ENCODE measurements at regions of chr16 and their contacts with region 1.

Region 1: DNA sequence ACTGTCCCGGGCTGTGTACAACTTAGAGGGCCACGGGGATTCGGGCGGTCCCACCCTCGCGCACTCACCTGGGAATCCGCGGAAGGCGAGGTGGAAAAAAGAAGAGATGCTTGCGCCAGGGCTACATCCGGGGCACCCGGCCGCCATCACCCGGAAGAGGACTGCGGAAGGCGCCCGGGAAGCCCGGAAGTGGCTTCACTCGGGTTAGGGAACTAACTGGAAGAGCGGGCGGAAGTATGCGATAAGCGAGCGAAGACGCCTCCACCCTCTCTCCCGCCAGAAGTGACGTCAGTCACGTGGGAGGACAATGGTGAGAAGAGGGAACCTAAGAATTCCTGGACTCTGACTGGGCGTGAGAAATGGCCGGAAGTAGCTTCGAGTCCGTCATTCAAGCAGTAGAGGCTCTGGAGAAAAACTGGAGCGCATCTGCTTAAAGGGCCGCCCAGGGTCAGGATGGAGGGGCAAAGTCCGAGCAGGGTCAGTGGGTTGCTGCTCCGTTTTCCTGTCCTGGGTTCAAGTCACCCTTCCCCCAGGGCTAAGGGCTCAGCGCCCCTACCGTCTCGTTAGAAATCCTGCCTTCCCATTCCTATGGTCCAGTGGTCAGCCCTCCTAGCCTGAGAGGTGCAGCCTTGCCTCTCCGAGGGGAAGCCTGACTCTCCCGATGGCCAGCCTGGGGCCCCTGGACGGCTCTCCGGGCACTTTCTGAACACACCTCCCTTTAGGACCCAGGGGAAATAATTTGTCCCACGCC is at the start of gene CD2BP2:
- DNase-seq: peak; percentile 97 to 99
- H3K4me3 ChIP-seq: peak within 1 kb of the TSS; percentile 99
- H3K27ac ChIP-seq: peak within 1 kb of the TSS; percentile 82
- H3K4me1 ChIP-seq: peaks cover 19% of the 10 kb centered on the region
- H3K27me3 ChIP-seq: no peaks in the 10 kb centered on the region
- CTCF ChIP-seq: no peak
- total RNA-seq, gene CD2BP2: 84.6 TPM in 2 replicates

Region 2: DNA sequence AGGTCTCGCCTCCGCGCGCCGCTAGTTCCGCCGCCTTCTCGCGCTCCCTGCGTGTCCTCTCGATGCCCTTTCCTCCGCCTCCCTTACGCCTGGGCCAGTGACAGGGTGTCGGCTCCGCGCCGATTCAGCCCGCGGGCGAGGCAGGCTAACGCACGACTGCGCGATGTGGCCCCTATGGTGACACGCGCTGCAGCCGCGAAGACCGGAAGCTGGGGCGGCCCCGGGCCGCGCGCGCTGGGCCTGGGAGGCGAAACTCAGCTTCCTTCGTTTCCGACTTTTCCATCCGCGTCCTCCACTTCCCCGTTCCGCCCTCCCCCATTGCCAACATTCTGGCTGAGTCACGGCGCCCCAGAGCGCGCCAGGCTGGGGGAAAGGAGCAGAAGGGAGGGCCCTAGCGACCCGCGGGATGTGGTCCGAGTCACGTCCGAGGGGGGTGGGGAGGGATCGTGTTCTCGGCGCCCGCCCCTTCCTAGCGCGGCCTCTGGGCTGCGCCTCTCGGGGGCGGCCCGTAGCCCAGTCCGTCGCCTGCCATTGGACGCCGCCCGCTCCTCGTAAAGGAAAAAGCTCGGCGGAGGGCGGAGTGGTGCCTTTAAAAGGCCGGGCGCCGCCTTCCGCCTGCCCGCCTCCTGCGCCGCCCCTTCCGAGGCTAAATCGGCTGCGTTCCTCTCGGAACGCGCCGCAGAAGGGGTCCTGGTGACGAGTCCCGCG is 290.0 kb before region 1 on chr16 and contains the start of gene ALDOA:
- CTCF ChIA-PET with region 1: no interaction called
- POLR2A ChIA-PET with region 1: no interaction called
- intact Hi-C with region 1: loop called (anchors 2 kb)
- DNase-seq: peak; percentile 95 to 100
- H3K4me3 ChIP-seq: peak within 1 kb of the TSS; percentile 94
- H3K27ac ChIP-seq: peak within 1 kb of the TSS; percentile 92
- H3K4me1 ChIP-seq: peaks cover 50% of the 10 kb centered on the region
- H3K27me3 ChIP-seq: no peaks in the 10 kb centered on the region
- CTCF ChIP-seq: no peak
- total RNA-seq, gene ALDOA: 2,395 and 3,090 TPM in 2 replicates

Region 3: DNA sequence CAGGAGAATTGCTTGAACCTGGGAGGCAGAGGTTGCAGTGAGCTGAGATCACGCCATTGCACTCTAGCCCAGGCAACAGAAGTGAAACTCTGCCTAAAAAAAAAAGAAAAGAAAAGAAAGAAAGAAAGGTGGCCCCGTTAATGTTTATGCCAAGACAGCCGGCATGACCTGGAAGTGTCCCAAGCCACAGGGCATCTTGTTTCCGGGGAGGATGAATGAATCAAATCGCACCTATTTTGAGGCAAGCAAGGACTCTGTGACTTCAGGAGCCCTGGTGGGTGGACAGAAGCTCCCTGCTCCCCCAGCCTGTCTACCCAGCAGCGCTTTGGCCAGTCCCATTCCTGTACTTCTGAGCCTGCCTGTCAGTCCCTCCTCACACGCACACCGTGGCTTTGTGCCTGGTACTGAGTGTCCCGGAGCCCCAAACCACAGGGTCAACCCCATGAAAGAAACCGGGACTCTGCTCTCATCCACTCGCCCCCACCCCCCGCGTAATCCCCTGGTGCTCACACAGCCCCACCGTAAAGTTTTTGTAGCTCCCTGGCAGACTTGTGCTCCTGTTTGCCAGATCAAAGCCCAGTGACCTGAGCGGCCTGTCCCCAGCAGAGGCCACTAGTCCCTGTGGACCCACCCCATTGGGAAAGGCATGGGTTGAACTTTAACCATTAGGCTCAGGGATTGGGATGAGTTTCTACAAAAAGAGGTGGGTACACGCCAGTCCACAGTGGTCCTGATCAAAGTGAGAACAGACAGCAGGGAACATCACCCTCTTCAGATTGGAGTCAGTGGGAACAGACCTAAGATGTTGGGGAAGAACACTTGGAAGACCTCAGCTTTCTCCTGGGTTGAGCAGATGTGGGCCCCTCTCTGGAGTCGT is 19.5 kb before region 1 on chr16:
- CTCF ChIA-PET with region 1: no interaction called
- POLR2A ChIA-PET with region 1: no interaction called
- intact Hi-C with region 1: loop called (anchors 1 kb)
- DNase-seq: peak in 1 of 2 experiments; percentile 66
- H3K4me3 ChIP-seq: peak overlapping the region; percentile 59
- H3K27ac ChIP-seq: peak overlapping the region; percentile 76
- H3K4me1 ChIP-seq: peaks cover 13% of the 10 kb centered on the region
- H3K27me3 ChIP-seq: no peaks in the 10 kb centered on the region
- CTCF ChIP-seq: no peak

Region 4: GRCh38 chr16:30395155-30395991 is 40.1 kb after region 1 on chr16 and contains the start of gene ZNF48:
- CTCF ChIA-PET with region 1: no interaction called
- POLR2A ChIA-PET with region 1: no interaction called
- intact Hi-C with region 1: loop called (anchors 1 kb)
- DNase-seq: peak; percentile 72 to 93
- H3K4me3 ChIP-seq: peak within 1 kb of the TSS; percentile 98
- H3K27ac ChIP-seq: peak within 1 kb of the TSS; percentile 68
- H3K4me1 ChIP-seq: peaks cover 19% of the 10 kb centered on the region
- H3K27me3 ChIP-seq: no peaks in the 10 kb centered on the region
- CTCF ChIP-seq: no peak; the same call in 1 of the 2 replicates
- total RNA-seq, gene ZNF48: 20.1 and 25.9 TPM in 2 replicates

Region 5: DNA sequence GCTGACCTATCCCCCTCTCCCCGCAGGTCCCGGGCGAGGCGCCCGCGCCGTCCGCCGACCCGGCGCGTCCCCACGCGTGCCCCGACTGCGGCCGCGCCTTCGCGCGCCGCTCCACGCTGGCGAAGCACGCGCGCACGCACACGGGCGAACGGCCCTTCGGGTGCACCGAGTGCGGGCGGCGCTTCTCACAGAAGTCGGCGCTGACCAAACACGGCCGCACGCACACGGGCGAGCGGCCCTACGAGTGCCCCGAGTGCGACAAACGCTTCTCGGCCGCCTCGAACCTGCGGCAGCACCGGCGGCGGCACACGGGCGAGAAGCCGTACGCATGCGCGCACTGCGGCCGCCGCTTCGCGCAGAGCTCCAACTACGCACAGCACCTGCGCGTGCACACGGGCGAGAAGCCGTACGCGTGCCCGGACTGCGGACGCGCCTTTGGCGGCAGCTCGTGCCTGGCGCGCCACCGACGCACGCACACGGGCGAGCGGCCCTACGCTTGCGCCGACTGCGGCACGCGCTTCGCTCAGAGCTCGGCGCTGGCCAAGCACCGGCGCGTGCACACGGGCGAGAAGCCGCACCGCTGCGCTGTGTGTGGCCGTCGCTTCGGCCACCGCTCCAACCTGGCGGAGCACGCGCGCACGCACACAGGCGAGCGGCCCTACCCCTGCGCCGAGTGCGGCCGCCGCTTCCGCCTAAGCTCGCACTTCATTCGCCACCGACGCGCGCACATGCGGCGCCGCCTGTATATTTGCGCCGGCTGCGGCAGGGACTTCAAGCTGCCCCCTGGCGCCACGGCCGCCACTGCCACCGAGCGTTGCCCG is 62.4 kb after region 1 on chr16:
- CTCF ChIA-PET with region 1: no interaction called
- POLR2A ChIA-PET with region 1: interaction called, 16 read pairs
- intact Hi-C with region 1: no loop called
- DNase-seq: peak; percentile 81 to 94
- H3K4me3 ChIP-seq: peak overlapping the region; percentile 69
- H3K27ac ChIP-seq: peak overlapping the region; percentile 49; the same call in 1 of the 2 replicates
- H3K4me1 ChIP-seq: peaks cover 7% of the 10 kb centered on the region; the same call in 1 of the 2 replicates
- H3K27me3 ChIP-seq: no peaks in the 10 kb centered on the region
- CTCF ChIP-seq: no peak

Region 6: GRCh38 chr16:30482366-30482765 is 127.0 kb after region 1 on chr16:
- CTCF ChIA-PET with region 1: no interaction called
- POLR2A ChIA-PET with region 1: no interaction called
- intact Hi-C with region 1: no loop called
- DNase-seq: no peak
- H3K4me3 ChIP-seq: no peak overlapping the region
- H3K27ac ChIP-seq: no peak overlapping the region
- H3K4me1 ChIP-seq: no peaks in the 10 kb centered on the region
- H3K27me3 ChIP-seq: 0 out of 2 replicates have a peak, but pooled peaks cover 4% of the 10 kb centered on the region
- CTCF ChIP-seq: peak; percentile 55; the same call in 1 of the 2 replicates

Region 7: GRCh38 chr16:30609926-30610839 is 254.9 kb after region 1 on chr16 and contains the start of gene ZNF689:
- CTCF ChIA-PET with region 1: no interaction called
- POLR2A ChIA-PET with region 1: interaction called, 15 read pairs
- intact Hi-C with region 1: no loop called
- DNase-seq: peak; percentile 88 to 98
- H3K4me3 ChIP-seq: peak within 1 kb of the TSS; percentile 89
- H3K27ac ChIP-seq: peak within 1 kb of the TSS; percentile 49
- H3K4me1 ChIP-seq: peaks cover 5% of the 10 kb centered on the region; the same call in 1 of the 2 replicates
- H3K27me3 ChIP-seq: no peaks in the 10 kb centered on the region
- CTCF ChIP-seq: no peak; the same call in 1 of the 2 replicates
- total RNA-seq, gene ZNF689: 9.1 and 10.1 TPM in 2 replicates

Measured in PC-9 (cell line).